ENCODE measurements at regions of chr10 and their contacts with region 1.

Region 1: GRCh38 chr10:70602665-70603448 is at the start of gene PRF1:
- DNase-seq: peak; percentile 66 to 94 (median 90)
- ATAC-seq: peak; percentile 90
- H3K4me3 ChIP-seq: peak within 1 kb of the TSS; percentile 71 to 86
- H3K4me3 Mint-ChIP-seq: peak within 1 kb of the TSS; percentile 100
- H3K27ac ChIP-seq: peak within 1 kb of the TSS; percentile 61 to 73
- H3K27ac Mint-ChIP-seq: peak within 1 kb of the TSS; percentile 99
- H3K4me1 ChIP-seq: peaks cover 57% of the 10 kb centered on the region
- H3K4me1 Mint-ChIP-seq: peaks cover 71% of the 10 kb centered on the region
- H3K27me3 ChIP-seq: no peaks in the 10 kb centered on the region
- H3K27me3 Mint-ChIP-seq: no peaks in the 10 kb centered on the region
- CTCF ChIP-seq: no peak
- total RNA-seq, gene PRF1: 56.4 to 57.3 TPM

Region 2: GRCh38 chr10:70619271-70620019 is 16.6 kb after region 1 on chr10:
- CTCF ChIA-PET with region 1: interaction called, 5 read pairs
- POLR2A ChIA-PET with region 1: interaction called, 13 read pairs
- intact Hi-C with region 1: loop called (anchors 2 kb)
- DNase-seq: peak in 2 of 9 experiments; percentile 30 to 44
- ATAC-seq: no peak
- H3K4me3 ChIP-seq: no peak overlapping the region
- H3K4me3 Mint-ChIP-seq: no peak overlapping the region
- H3K27ac ChIP-seq: no peak overlapping the region
- H3K27ac Mint-ChIP-seq: peak overlapping the region; percentile 25
- H3K4me1 ChIP-seq: peaks cover 21% of the 10 kb centered on the region
- H3K4me1 Mint-ChIP-seq: peaks cover 41% of the 10 kb centered on the region
- H3K27me3 ChIP-seq: no peaks in the 10 kb centered on the region
- H3K27me3 Mint-ChIP-seq: no peaks in the 10 kb centered on the region
- CTCF ChIP-seq: no peak

Measured in CD8-positive, alpha-beta T cell (primary cell).